SK-N-SH (cell line): ENCODE measurements at regions of chr7 and their contacts with region 1.

Region 1: DNA sequence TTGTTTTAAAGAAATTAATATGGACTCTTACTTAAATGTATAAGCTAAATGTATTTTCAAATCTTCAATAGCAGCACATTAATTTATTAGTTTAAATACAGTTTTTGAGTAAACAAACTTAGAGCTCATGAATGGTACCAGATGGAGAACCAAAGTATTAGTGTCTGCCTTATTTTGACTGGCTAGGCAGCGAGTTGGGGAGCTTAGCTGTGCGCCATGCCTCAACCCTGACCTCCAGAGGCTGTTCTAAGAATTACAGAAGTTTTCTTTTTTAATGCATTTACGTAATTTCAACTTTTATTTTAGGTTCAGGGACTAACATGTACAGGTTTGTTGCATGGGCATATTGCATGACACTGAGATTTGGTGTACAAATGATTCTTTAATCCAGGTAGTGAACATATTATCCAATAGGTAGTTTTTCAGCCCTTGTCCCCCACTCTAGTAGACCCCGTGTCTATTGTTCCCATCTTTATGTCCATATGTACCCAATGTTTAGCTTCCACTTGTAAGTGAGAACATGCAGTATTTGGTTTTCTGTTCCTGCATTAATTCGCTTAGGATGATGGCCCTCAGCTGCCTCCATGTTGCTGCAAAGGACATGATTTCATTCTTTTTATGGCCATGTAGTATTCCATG is 166.8 kb downstream of the IQUB start:
- DNase-seq: peak; percentile 66
- H3K4me3 ChIP-seq: no peak overlapping the region
- H3K27ac ChIP-seq: no peak overlapping the region
- H3K4me1 ChIP-seq: no peaks in the 10 kb centered on the region
- H3K27me3 ChIP-seq: no peaks in the 10 kb centered on the region
- CTCF ChIP-seq: peak; percentile 91
- EP300 ChIP-seq: no peak
- RAD21 ChIP-seq: peak; percentile 99

Region 2: GRCh38 chr7:123070702-123071286 is 296.8 kb before region 1 on chr7:
- CTCF ChIA-PET with region 1: interaction called, 26 read pairs
- POLR2A ChIA-PET with region 1: no interaction called
- DNase-seq: peak; percentile 39
- H3K4me3 ChIP-seq: no peak overlapping the region
- H3K27ac ChIP-seq: no peak overlapping the region
- H3K4me1 ChIP-seq: no peaks in the 10 kb centered on the region
- H3K27me3 ChIP-seq: no peaks in the 10 kb centered on the region
- CTCF ChIP-seq: peak; percentile 83
- EP300 ChIP-seq: no peak
- RAD21 ChIP-seq: peak; percentile 83

Region 3: DNA sequence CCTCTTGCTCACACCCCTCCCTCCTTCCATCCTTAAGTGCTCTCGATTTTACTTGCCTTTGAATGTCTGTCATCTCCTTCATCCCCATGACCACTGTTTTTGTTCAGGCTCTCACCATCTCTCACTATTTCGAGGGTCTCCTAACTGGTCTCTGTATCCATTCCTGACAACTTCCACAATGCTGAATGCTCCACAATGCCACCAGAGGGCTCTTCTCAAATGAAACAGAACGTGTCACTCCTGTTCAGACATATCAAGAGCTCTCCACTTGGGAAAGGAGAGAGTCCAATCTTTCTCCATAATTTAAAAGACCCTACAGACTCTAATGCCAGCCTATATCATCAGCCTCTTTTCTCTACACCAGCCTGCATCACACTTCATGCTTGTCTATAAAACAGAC is 158.8 kb before region 1 on chr7:
- CTCF ChIA-PET with region 1: interaction called, 90 read pairs
- POLR2A ChIA-PET with region 1: interaction called, 3 read pairs
- DNase-seq: peak; percentile 7
- H3K4me3 ChIP-seq: no peak overlapping the region
- H3K27ac ChIP-seq: no peak overlapping the region
- H3K4me1 ChIP-seq: no peaks in the 10 kb centered on the region
- H3K27me3 ChIP-seq: no peaks in the 10 kb centered on the region
- CTCF ChIP-seq: peak; percentile 42
- EP300 ChIP-seq: no peak
- RAD21 ChIP-seq: peak; percentile 67

Region 4: GRCh38 chr7:123231027-123232000 is 136.3 kb before region 1 on chr7:
- CTCF ChIA-PET with region 1: interaction called, 17 read pairs
- POLR2A ChIA-PET with region 1: no interaction called
- DNase-seq: no peak
- H3K4me3 ChIP-seq: no peak overlapping the region
- H3K27ac ChIP-seq: no peak overlapping the region
- H3K4me1 ChIP-seq: no peaks in the 10 kb centered on the region; a peak in 2 of 4 replicates
- H3K27me3 ChIP-seq: no peaks in the 10 kb centered on the region
- CTCF ChIP-seq: no peak
- EP300 ChIP-seq: no peak
- RAD21 ChIP-seq: peak; percentile 47; the same call in 1 of the 2 replicates

Region 5: DNA sequence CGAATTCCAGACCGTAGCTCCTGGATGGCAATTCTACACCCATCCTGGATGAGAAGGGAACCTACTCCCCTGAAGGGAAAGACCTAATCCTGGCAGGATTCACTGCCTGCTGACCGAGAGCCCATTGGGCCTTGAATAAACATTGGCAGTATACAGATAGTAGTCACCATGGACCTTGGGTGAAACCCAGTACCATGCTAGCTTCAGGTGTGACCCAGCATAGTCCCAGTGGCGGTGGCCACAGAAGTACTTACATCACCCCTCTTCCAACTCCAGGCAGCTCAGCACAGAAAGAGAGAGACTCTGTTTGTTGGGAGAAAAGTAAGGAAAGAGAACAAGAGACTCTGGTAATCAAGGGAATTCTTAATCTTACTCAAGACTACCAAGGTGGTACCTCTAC is 70.6 kb before region 1 on chr7:
- CTCF ChIA-PET with region 1: interaction called, 10 read pairs
- POLR2A ChIA-PET with region 1: no interaction called
- DNase-seq: no peak
- H3K4me3 ChIP-seq: no peak overlapping the region
- H3K27ac ChIP-seq: no peak overlapping the region
- H3K4me1 ChIP-seq: peaks cover 0 to 5% of the 10 kb centered on the region in 2 experiments; a peak in 2 of 4 replicates
- H3K27me3 ChIP-seq: no peaks in the 10 kb centered on the region
- CTCF ChIP-seq: no peak
- EP300 ChIP-seq: no peak
- RAD21 ChIP-seq: no peak

Region 6: GRCh38 chr7:123355576-123356195 is 11.9 kb before region 1 on chr7:
- CTCF ChIA-PET with region 1: interaction called, 14 read pairs
- POLR2A ChIA-PET with region 1: no interaction called
- DNase-seq: no peak
- H3K4me3 ChIP-seq: no peak overlapping the region
- H3K27ac ChIP-seq: no peak overlapping the region
- H3K4me1 ChIP-seq: peaks cover 0 to 24% of the 10 kb centered on the region in 2 experiments; a peak in 2 of 4 replicates
- H3K27me3 ChIP-seq: no peaks in the 10 kb centered on the region
- CTCF ChIP-seq: peak; percentile 11; the same call in 1 of the 2 replicates
- EP300 ChIP-seq: no peak
- RAD21 ChIP-seq: no peak

Region 7: GRCh38 chr7:123633553-123633952 is 265.9 kb after region 1 on chr7:
- CTCF ChIA-PET with region 1: no interaction called
- POLR2A ChIA-PET with region 1: no interaction called
- DNase-seq: peak; percentile 27
- H3K4me3 ChIP-seq: no peak overlapping the region; a peak in 1 of 4 replicates
- H3K27ac ChIP-seq: peak overlapping the region; percentile 1 to 48; a peak in 3 of 4 replicates
- H3K4me1 ChIP-seq: peaks cover 4 to 11% of the 10 kb centered on the region in 2 experiments; a peak in 2 of 4 replicates
- H3K27me3 ChIP-seq: no peaks in the 10 kb centered on the region
- CTCF ChIP-seq: no peak
- EP300 ChIP-seq: peak in 1 of 2 experiments; percentile 65; a peak in 1 of 4 replicates
- RAD21 ChIP-seq: no peak